Pancreas (tissue), 10 donors: ENCODE measurements at regions of chr1 and their contacts with region 1.

Region 1: GRCh38 chr1:43067977-43068751 is 103.9 kb downstream of the EBNA1BP2 start:
- DNase-seq: peak in 2 of 6 donors; percentile 66 to 67
- ATAC-seq: peak; percentile 31 to 60 (median 41)
- H3K4me3 ChIP-seq: peak overlapping the region in 3 of 4 donors; percentile 21 to 43 (median 26)
- H3K27ac ChIP-seq: no peak overlapping the region
- H3K4me1 ChIP-seq: no peaks in the 10 kb centered on the region
- H3K27me3 ChIP-seq: no peaks in the 10 kb centered on the region
- CTCF ChIP-seq: no peak

Region 2: DNA sequence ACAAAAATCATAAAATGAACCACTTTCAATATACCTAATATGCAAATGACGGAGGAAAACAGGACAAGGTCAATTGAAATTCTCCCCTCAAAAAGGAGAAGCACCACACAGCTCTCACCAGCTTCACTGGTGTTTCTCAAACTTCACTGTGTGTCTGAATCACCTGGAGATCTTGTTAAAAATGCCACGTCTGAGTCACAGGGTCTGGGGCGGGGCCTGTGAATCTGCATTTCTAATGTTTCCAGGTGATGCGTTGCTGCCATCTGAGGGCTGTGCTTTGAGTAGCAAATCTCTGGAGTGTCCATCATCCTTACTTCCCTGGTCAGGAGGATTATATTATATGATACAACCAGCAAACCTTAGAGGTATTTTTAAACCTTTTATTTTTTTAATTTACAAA is 337.2 kb before region 1 on chr1:
- intact Hi-C with region 1: no loop called
- DNase-seq: no peak
- ATAC-seq: no peak
- H3K4me3 ChIP-seq: no peak overlapping the region
- H3K27ac ChIP-seq: no peak overlapping the region
- H3K4me1 ChIP-seq: no peaks in the 10 kb centered on the region
- H3K27me3 ChIP-seq: no peaks in the 10 kb centered on the region
- CTCF ChIP-seq: no peak

Region 3: DNA sequence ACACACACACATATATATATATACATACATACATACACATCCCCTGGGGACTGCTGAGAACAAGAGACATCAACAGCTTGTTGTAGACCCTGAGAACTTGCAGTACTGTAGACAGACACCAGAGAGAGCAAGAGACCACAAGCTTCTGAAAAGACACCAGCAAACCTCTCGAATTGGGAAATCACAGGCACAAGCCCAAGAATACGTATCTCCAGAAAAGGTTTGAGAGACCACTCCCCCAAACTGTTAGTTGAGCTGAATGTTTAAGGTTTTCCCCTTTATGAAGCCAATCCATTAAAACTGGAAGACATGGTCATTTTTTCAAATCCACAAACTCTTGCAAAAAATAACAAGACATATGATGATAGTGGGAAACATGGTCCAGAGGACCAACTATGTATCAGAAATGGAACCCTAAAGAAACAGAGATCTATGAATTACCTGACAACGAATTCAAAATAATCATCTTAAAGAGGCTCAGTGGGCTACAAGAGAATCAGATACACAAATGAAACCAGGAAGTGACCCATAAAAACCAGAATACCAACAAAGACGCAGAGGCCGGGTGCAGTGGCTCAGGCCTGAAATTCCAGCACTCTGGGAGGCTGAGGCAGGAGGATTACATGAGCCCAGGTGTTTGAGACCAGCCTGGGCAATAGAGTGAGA is 154.6 kb before region 1 on chr1:
- intact Hi-C with region 1: loop called (anchors 5 to 10 kb)
- DNase-seq: peak in 2 of 6 donors; percentile 54 to 78
- ATAC-seq: peak; percentile 84 to 96 (median 95)
- H3K4me3 ChIP-seq: no peak overlapping the region
- H3K27ac ChIP-seq: no peak overlapping the region
- H3K4me1 ChIP-seq: no peaks in the 10 kb centered on the region
- H3K27me3 ChIP-seq: no peaks in the 10 kb centered on the region
- CTCF ChIP-seq: peak; percentile 44 to 65 (median 56)

Region 4: GRCh38 chr1:42931108-42931539 is 137.0 kb before region 1 on chr1:
- intact Hi-C with region 1: loop called in 1 of 3 experiments (anchors 10 kb)
- DNase-seq: no peak
- ATAC-seq: peak; percentile 49 to 71 (median 58)
- H3K4me3 ChIP-seq: no peak overlapping the region
- H3K27ac ChIP-seq: peak overlapping the region in 2 of 4 donors; percentile 71 to 81
- H3K4me1 ChIP-seq: no peaks in the 10 kb centered on the region
- H3K27me3 ChIP-seq: no peaks in the 10 kb centered on the region
- CTCF ChIP-seq: peak in 3 of 4 donors; percentile 26 to 38 (median 33)